Ascending aorta (tissue), 2 donors: ENCODE measurements at regions of chr3 and their contacts with region 1.

Region 1: GRCh38 chr3:124995460-124995994 is 60.3 kb downstream of the HEG1 start:
- DNase-seq: peak in 1 of 2 donors; percentile 68
- H3K4me3 ChIP-seq: no peak overlapping the region
- H3K27ac ChIP-seq: no peak overlapping the region
- H3K4me1 ChIP-seq: no peaks in the 10 kb centered on the region
- H3K27me3 ChIP-seq: no peaks in the 10 kb centered on the region
- CTCF ChIP-seq: peak; percentile 53 to 74 (median 71)

Region 2: DNA sequence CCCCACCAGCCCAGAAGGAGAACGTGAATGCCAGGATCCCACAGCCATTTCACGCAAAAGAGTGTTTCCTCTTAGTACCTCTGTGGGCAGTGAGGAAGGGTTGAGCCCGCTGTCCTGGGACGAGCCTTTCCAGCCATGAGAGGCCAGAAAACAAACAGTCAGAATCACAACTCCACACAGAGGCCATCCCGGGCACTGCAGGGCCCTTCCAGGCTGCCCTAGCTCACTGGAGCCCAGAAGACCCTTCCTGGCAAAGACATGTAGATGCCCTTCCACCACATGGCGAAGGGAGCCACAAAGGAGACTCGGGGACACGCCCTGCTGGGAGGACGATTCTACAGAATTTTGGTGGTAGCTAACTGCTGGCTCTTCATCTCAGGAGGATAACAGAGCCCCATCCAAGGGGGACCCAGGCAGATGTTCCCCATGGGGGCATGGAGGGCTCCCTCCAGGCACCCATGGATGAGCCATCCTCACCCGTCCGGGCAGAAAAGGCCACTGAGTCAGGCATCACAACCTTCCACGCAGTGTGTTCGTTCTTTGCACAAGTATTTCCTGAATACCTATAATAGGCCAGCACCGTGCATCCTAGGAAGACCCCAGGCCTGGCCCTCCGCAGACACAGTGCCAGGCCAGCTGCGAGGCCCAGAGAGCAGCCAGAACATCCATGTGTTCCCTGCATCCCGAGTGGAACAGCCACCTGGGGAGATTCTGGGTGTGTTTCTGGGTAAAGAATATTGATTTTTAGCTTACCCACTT is 169.8 kb after region 1 on chr3:
- intact Hi-C with region 1: loop called (anchors 10 kb)
- DNase-seq: peak in 1 of 2 donors; percentile 74
- H3K4me3 ChIP-seq: no peak overlapping the region
- H3K27ac ChIP-seq: no peak overlapping the region
- H3K4me1 ChIP-seq: no peaks in the 10 kb centered on the region
- H3K27me3 ChIP-seq: no peaks in the 10 kb centered on the region
- CTCF ChIP-seq: peak; percentile 35 to 62 (median 50)

Region 3: GRCh38 chr3:125437631-125438435 is 442.3 kb after region 1 on chr3:
- intact Hi-C with region 1: loop called (anchors 1 kb)
- DNase-seq: peak in 1 of 2 donors; percentile 78
- H3K4me3 ChIP-seq: no peak overlapping the region
- H3K27ac ChIP-seq: no peak overlapping the region
- H3K4me1 ChIP-seq: peaks cover 0 to 3% of the 10 kb centered on the region in 2 donors
- H3K27me3 ChIP-seq: no peaks in the 10 kb centered on the region
- CTCF ChIP-seq: peak; percentile 73 to 96 (median 95)